ENCODE measurements at regions of chr10 and their contacts with region 1.

Region 1: GRCh38 chr10:26860443-26861204 is at the start of gene ABI1:
- DNase-seq: peak; percentile 97
- H3K4me3 Mint-ChIP-seq: peak within 1 kb of the TSS; percentile 97
- H3K27ac Mint-ChIP-seq: peak within 1 kb of the TSS; percentile 98
- H3K4me1 Mint-ChIP-seq: peaks cover 30% of the 10 kb centered on the region
- H3K27me3 Mint-ChIP-seq: peaks cover 13% of the 10 kb centered on the region
- total RNA-seq, gene ABI1: 50.1 and 52.7 TPM in 2 replicates

Region 2: DNA sequence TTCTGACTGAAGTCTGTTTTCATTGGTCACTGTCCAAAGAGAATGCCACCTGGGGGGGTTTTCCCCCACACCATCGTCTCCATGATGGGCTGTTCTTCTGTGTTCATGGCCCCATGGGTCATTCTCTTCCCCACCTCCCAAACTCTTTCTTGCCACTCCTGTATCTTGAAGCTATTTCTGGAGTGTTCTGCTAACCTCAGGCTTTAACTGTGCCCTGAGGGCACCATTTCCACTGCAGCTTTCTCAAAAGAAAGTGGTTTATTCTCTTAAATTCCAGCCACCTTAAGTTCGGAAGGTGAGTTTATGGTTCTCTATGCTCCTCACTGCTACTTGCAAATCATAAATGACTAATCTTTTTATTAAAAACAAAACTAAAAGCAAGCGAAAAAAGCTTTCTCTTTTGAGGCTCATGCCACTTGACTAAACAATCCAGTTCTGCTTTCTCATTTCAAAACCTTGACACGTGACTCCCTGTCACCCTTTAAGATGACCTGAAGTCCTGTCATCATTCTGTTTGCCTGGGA is 429.9 kb before region 1 on chr10:
- intact Hi-C with region 1: loop called (anchors 2 kb)
- DNase-seq: no peak
- H3K4me3 Mint-ChIP-seq: no peak overlapping the region
- H3K27ac Mint-ChIP-seq: peak overlapping the region; percentile 86
- H3K4me1 Mint-ChIP-seq: peaks cover 15% of the 10 kb centered on the region
- H3K27me3 Mint-ChIP-seq: no peaks in the 10 kb centered on the region

Region 3: DNA sequence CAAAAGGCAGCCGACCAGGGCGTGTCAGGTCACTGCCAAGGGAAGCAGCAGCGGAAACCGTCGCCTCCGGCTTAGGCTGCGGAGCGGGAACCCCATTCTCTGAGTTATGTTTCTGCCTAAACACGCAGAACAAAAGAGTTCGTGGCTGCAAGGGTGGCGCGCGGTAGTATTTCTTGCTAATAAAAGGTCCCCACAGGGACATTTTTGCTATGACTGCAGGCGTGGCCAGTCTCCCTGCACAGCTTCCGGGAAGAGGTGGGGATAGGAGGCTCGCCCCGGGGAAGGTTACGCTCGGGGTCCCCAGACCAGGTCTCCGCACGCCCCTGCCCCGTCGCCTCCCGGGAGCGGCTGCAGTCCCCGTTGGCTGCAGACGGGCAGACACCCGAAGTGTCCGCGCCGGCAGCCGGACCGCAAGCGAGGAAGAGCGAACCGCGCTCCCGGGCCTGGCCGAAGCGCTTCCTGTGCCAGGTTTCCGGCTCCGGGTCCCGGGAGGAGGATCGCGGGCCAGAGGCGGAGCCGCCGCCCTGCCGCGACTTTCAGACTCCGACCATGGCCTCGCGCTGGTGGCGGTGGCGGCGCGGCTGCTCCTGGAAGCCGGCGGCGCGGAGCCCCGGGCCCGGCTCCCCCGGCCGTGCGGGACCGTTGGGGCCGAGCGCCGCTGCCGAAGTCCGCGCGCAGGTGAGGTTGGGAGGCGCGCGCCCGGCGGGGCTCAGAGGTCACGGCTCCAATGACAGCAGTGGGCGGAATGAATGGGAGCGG is 163.3 kb before region 1 on chr10 and contains the start of gene PDSS1:
- intact Hi-C with region 1: loop called (anchors 1 kb)
- DNase-seq: peak; percentile 64
- H3K4me3 Mint-ChIP-seq: peak within 1 kb of the TSS; percentile 99
- H3K27ac Mint-ChIP-seq: peak within 1 kb of the TSS; percentile 92
- H3K4me1 Mint-ChIP-seq: peaks cover 30% of the 10 kb centered on the region
- H3K27me3 Mint-ChIP-seq: no peaks in the 10 kb centered on the region
- total RNA-seq, gene PDSS1: 27.9 and 32.3 TPM in 2 replicates

Region 4: DNA sequence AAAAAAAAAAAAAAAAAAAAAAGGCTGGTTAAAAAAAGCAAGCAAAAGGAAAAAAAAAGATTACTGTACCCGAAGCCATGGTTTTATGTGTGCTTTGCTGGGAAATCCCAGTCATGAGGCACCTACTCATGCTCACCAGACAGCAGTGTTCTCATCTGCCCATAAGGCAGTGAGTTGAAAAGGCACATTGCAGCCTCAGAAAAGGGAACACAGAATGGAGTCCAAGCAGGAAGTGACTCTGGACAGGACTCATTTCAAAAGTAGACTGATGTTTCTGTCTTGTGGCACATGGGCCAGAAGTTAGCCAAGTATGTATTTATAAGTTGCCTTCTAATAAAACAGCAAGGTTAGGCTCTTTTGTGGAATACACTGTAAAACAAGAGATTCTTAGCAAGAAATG is 122.9 kb before region 1 on chr10:
- intact Hi-C with region 1: loop called (anchors 1 kb)
- DNase-seq: peak; percentile 26
- H3K4me3 Mint-ChIP-seq: no peak overlapping the region
- H3K27ac Mint-ChIP-seq: peak overlapping the region; percentile 96
- H3K4me1 Mint-ChIP-seq: peaks cover 49% of the 10 kb centered on the region
- H3K27me3 Mint-ChIP-seq: no peaks in the 10 kb centered on the region

Region 5: GRCh38 chr10:26805567-26806245 is 54.9 kb before region 1 on chr10:
- intact Hi-C with region 1: loop called (anchors 2 kb)
- DNase-seq: no peak
- H3K4me3 Mint-ChIP-seq: no peak overlapping the region
- H3K27ac Mint-ChIP-seq: no peak overlapping the region
- H3K4me1 Mint-ChIP-seq: peaks cover 53% of the 10 kb centered on the region
- H3K27me3 Mint-ChIP-seq: no peaks in the 10 kb centered on the region

Region 6: GRCh38 chr10:26881600-26882331 is 21.1 kb after region 1 on chr10:
- intact Hi-C with region 1: loop called (anchors 2 kb)
- DNase-seq: no peak
- H3K4me3 Mint-ChIP-seq: no peak overlapping the region
- H3K27ac Mint-ChIP-seq: no peak overlapping the region
- H3K4me1 Mint-ChIP-seq: peaks cover 1% of the 10 kb centered on the region
- H3K27me3 Mint-ChIP-seq: peaks cover 33% of the 10 kb centered on the region

Region 7: GRCh38 chr10:27155066-27155754 is 294.6 kb after region 1 on chr10 and contains the start of gene MASTL:
- intact Hi-C with region 1: loop called (anchors 2 kb)
- DNase-seq: peak; percentile 93
- H3K4me3 Mint-ChIP-seq: peak within 1 kb of the TSS; percentile 99
- H3K27ac Mint-ChIP-seq: peak within 1 kb of the TSS; percentile 100
- H3K4me1 Mint-ChIP-seq: peaks cover 31% of the 10 kb centered on the region
- H3K27me3 Mint-ChIP-seq: no peaks in the 10 kb centered on the region
- total RNA-seq, gene MASTL: 26.7 and 29.7 TPM in 2 replicates

Region 8: DNA sequence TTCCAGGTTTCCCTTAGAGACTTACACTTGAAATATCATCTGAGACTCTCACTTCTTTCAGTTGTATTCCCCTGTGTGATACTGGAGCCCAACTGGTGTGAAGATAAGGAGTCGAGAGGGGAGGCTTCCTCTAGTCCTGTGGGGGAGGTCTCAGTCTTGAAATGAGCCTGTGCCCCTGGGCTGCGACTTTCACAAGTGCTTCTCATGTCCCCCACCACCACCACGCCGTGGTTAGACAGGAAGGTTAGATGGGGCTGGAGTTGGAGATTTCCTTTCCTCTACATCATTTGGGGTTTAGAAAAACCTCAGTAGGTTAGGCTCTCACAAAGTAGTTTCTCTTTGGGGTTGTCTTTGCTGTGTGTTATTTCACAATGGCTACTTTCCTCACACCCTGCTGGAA is 910.6 kb after region 1 on chr10:
- intact Hi-C with region 1: no loop called
- DNase-seq: no peak
- H3K4me3 Mint-ChIP-seq: no peak overlapping the region
- H3K27ac Mint-ChIP-seq: no peak overlapping the region
- H3K4me1 Mint-ChIP-seq: peaks cover 4% of the 10 kb centered on the region
- H3K27me3 Mint-ChIP-seq: peaks cover 40% of the 10 kb centered on the region

Measured in activated T-helper 2 cell treated with anti-CD3 and anti-CD28 coated beads, Interferon-gamma antibody, Interleukin-2, Interleukin-4, amounts not matched to agents 10 μg/mL and 5 μg/mL and 100 μg/mL, durations not matched to agents 14 hours and 24 hours and 36 hours (primary cell).